ENCODE measurements at regions of chr10 and their contacts with region 1.

Region 1: DNA sequence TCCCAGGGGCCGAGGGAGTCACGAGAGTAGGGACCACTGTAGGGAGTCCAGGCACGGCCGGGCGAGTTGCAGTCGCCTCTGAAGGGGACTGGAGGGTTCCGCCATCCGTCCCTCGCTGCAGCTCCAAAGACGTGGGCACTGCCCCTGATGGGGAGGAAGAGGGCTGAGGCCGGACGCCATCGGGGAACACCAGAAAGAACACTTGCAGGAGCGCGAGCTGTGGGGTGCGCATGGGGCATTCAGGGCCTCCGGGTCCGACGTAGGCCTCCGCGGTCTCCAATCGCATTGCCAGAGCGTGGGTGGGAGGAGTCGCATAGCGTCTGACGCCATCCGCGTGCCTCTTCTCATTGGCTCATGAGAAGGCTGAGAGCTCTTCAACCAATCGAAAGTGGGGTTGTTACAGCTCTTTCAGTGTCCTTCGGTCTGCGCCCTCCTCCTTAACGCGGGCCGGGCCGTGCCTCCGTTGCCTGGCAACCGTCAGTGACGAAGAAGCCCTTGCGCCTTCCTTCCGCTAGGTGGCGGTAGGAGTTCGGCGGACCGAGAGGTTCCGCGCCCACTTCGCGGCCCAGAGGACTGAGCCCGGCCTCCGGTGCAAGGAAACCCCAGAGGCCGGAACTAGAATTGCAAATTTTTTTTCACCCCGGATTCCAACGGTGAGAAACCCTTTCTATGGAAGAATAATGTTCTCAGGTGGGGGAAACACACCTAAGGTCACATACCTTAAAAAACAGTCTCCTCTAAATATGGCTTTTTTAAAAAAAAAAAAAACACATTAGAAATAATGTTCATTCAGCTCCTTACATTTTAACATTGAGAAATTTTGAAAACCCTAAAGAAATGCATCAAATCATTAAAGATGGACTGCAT is at the start of gene TCTN3:
- DNase-seq: peak; percentile 98
- ATAC-seq: peak; percentile 99
- H3K4me3 Mint-ChIP-seq: peak within 1 kb of the TSS; percentile 95
- H3K27ac Mint-ChIP-seq: peak within 1 kb of the TSS; percentile 91
- H3K4me1 Mint-ChIP-seq: peaks cover 34% of the 10 kb centered on the region
- H3K27me3 Mint-ChIP-seq: no peaks in the 10 kb centered on the region
- total RNA-seq, gene TCTN3: 19.5 to 20.4 TPM

Region 2: DNA sequence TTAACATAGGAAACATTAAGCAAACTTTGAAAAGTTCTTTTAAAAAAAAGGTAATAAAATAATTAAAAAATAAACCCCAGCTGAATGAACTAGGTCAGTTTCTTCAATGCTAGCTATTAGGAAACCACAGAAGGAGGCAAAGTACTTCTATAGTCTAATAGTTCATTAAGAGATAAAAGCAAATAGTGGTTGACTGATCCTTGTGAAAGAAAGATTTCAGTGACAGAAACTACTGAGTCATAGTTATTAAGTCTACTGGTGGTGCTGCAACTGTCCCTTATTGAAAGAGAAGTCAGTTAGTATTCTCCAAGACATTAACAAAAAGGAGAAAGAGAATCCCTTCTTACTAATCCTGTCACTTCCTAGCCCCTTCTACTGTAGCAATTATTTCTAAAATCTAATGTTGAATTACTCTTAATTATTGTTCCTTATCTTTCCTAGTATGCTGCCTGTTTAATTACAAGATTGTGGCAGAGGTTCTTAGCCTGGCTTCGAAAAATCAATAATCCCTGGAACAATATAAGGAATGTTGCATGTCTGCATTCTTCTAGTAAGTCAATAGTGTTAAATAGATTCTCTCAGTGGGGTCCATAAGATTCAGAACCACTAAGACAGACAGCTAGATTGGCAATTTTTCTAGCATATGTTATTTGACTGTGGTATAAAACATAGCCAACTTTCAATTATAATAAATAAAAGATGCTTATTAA is 18.3 kb before region 1 on chr10:
- CTCF ChIA-PET with region 1: interaction called, 36 read pairs
- POLR2A ChIA-PET with region 1: no interaction called
- DNase-seq: no peak
- ATAC-seq: no peak
- H3K4me3 Mint-ChIP-seq: no peak overlapping the region
- H3K27ac Mint-ChIP-seq: no peak overlapping the region
- H3K4me1 Mint-ChIP-seq: no peaks in the 10 kb centered on the region
- H3K27me3 Mint-ChIP-seq: no peaks in the 10 kb centered on the region

Region 3: GRCh38 chr10:95728526-95728925 is 34.6 kb after region 1 on chr10:
- CTCF ChIA-PET with region 1: interaction called, 25 read pairs
- POLR2A ChIA-PET with region 1: no interaction called
- DNase-seq: no peak
- ATAC-seq: no peak
- H3K4me3 Mint-ChIP-seq: no peak overlapping the region
- H3K27ac Mint-ChIP-seq: no peak overlapping the region
- H3K4me1 Mint-ChIP-seq: no peaks in the 10 kb centered on the region
- H3K27me3 Mint-ChIP-seq: peaks cover 35% of the 10 kb centered on the region

Region 4: GRCh38 chr10:95783741-95784140 is 89.8 kb after region 1 on chr10:
- CTCF ChIA-PET with region 1: interaction called, 59 read pairs
- POLR2A ChIA-PET with region 1: no interaction called
- DNase-seq: no peak
- ATAC-seq: no peak
- H3K4me3 Mint-ChIP-seq: no peak overlapping the region
- H3K27ac Mint-ChIP-seq: no peak overlapping the region
- H3K4me1 Mint-ChIP-seq: peaks cover 69% of the 10 kb centered on the region
- H3K27me3 Mint-ChIP-seq: peaks cover 20% of the 10 kb centered on the region

Region 5: DNA sequence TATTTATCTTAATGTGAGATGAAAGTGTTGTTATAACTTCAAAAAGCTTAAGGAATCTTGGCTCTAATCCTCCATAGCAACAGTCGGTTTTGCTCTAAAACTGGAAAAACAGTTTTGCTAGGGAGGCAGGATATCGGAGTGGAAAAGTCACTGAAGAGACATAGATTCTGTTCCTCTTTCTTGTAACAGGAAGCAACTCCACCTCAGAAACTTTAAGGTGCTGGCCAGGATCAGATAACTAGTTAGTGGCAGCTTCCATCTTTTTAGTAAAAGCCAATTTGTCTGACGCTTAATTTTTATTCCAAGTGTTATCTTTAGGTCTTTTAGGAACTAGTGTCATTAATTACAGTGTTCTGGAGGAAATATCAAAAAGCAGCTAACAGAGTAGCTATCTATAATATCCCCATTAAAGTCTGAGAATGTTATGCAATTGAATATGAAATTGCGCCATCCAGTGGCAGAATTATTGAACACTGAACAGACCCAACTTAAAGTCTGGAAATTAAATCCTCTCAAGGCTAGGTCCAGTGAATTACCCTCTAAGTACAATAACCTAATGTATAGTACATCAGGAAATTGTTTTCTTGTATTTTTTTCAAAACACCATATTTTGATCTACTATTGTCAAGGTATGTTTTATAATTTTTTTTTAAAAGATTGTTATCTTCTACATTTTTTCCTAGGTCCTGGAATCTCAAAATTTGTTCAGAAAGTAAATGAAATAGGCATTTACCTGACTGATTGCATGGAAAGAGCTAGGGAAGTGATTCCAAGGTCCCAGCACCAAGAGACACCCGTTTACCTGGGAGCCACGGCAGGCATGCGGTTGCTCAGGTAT is 148.0 kb after region 1 on chr10:
- CTCF ChIA-PET with region 1: interaction called, 775 read pairs
- POLR2A ChIA-PET with region 1: interaction called, 13 read pairs
- DNase-seq: peak; percentile 69
- ATAC-seq: peak; percentile 67
- H3K4me3 Mint-ChIP-seq: peak overlapping the region; percentile 27
- H3K27ac Mint-ChIP-seq: peak overlapping the region; percentile 76
- H3K4me1 Mint-ChIP-seq: peaks cover 53% of the 10 kb centered on the region
- H3K27me3 Mint-ChIP-seq: peaks cover 2% of the 10 kb centered on the region

Region 6: DNA sequence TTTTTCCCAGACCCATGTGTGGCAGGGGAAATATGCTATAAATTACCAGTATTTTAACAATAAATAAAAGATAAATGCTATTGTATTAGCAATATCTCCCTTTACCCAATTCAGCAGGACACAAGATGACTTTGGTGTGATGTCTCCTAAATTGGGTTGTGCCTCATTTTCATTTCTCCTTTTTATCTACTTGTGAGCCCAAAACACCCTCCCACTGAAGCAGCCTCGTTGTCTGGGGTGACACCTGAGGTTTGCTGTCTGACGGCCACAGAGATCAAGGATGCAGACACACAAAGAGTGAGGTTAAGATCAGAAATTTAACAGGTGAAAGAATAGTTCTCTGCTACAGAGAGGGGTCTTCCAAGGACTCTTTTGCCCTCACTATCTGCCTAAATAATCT is 186.8 kb after region 1 on chr10:
- CTCF ChIA-PET with region 1: interaction called, 21 read pairs
- POLR2A ChIA-PET with region 1: no interaction called
- DNase-seq: no peak
- ATAC-seq: no peak
- H3K4me3 Mint-ChIP-seq: no peak overlapping the region
- H3K27ac Mint-ChIP-seq: no peak overlapping the region
- H3K4me1 Mint-ChIP-seq: no peaks in the 10 kb centered on the region
- H3K27me3 Mint-ChIP-seq: no peaks in the 10 kb centered on the region

Region 7: GRCh38 chr10:96017191-96017687 is 323.3 kb after region 1 on chr10:
- CTCF ChIA-PET with region 1: interaction called, 11 read pairs
- POLR2A ChIA-PET with region 1: no interaction called
- DNase-seq: peak; percentile 65
- ATAC-seq: peak; percentile 95
- H3K4me3 Mint-ChIP-seq: no peak overlapping the region
- H3K27ac Mint-ChIP-seq: no peak overlapping the region
- H3K4me1 Mint-ChIP-seq: no peaks in the 10 kb centered on the region
- H3K27me3 Mint-ChIP-seq: peaks cover 2% of the 10 kb centered on the region

Measured in activated CD8-positive, alpha-beta T cell treated with anti-CD3 and anti-CD28 coated beads, Interleukin-2, amount 10 ng/mL, durations not matched to agents 7 days and 5 days (primary cell).